Naive thymus-derived CD4-positive, alpha-beta T cell (primary cell): ENCODE measurements at regions of chr4 and their contacts with region 1.

Region 1: DNA sequence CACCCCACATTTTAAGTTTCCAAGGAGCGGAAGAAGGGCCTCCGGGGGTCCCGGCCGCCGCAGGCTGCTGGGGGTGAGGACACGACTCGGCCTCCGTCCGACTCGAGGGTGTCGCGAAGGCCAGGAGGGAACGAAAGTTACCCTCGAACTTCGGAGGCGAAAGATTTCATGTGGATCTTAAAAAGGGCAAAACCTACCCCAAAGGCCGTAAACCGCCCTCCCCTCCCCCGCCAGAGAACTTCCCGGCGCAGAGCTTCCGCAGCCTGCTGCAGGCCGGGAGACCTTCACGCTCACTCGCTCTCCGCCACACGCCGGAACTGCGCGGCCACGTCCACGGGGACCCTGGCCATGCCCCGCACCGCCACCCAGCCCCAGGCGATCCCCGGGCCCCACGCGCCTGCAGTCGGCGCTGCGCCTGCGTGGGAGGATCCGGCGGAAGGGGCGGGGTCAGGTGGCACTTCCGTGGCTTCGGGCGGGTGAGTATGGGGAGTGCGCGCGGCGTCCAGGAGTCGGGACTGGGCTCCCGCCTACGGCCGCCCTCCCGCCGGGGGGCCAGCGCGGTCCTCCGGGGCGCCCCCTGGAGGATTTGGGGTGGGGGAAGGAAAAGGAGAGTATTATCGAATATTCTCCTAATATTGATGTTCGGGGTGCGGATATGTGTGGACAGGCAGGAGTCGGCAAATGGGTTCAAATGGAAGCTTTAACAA is at the start of gene MMAA:
- DNase-seq: peak; percentile 90 to 99 (median 92)
- ATAC-seq: peak; percentile 97
- H3K4me3 ChIP-seq: peak within 1 kb of the TSS; percentile 93
- H3K4me3 Mint-ChIP-seq: peak within 1 kb of the TSS; percentile 90 to 99 (median 98)
- H3K27ac ChIP-seq: peak within 1 kb of the TSS; percentile 94
- H3K27ac Mint-ChIP-seq: peak within 1 kb of the TSS; percentile 95 to 100 (median 99)
- H3K4me1 ChIP-seq: peaks cover 18 to 29% of the 10 kb centered on the region in 2 donors
- H3K4me1 Mint-ChIP-seq: peaks cover 16 to 55% (median 47%) of the 10 kb centered on the region in 7 donors
- H3K27me3 ChIP-seq: no peaks in the 10 kb centered on the region
- H3K27me3 Mint-ChIP-seq: peaks cover 1 to 5% (median 5%) of the 10 kb centered on the region in 5 donors
- total RNA-seq, gene MMAA: 7.2 to 17.3 (median 12.8) TPM

Region 2: GRCh38 chr4:145034727-145035211 is 584.3 kb before region 1 on chr4:
- CTCF ChIA-PET with region 1: no interaction called
- POLR2A ChIA-PET with region 1: no interaction called
- intact Hi-C with region 1: loop called in 1 of 2 experiments (anchors 10 kb)
- DNase-seq: no peak
- ATAC-seq: no peak
- H3K4me3 ChIP-seq: no peak overlapping the region
- H3K4me3 Mint-ChIP-seq: no peak overlapping the region
- H3K27ac ChIP-seq: no peak overlapping the region
- H3K27ac Mint-ChIP-seq: no peak overlapping the region
- H3K4me1 ChIP-seq: no peaks in the 10 kb centered on the region
- H3K4me1 Mint-ChIP-seq: peaks cover 0 to 11% (median 0%) of the 10 kb centered on the region in 7 donors
- H3K27me3 ChIP-seq: no peaks in the 10 kb centered on the region
- H3K27me3 Mint-ChIP-seq: no peaks in the 10 kb centered on the region

Region 3: GRCh38 chr4:145154573-145154972 is 464.5 kb before region 1 on chr4:
- CTCF ChIA-PET with region 1: interaction called, 7 read pairs
- POLR2A ChIA-PET with region 1: no interaction called
- intact Hi-C with region 1: loop called in 1 of 2 experiments (anchors 2 kb)
- DNase-seq: peak in 1 of 9 donors; percentile 11
- ATAC-seq: peak; percentile 45
- H3K4me3 ChIP-seq: no peak overlapping the region
- H3K4me3 Mint-ChIP-seq: no peak overlapping the region
- H3K27ac ChIP-seq: no peak overlapping the region
- H3K27ac Mint-ChIP-seq: peak overlapping the region in 1 of 9 donors; percentile 38
- H3K4me1 ChIP-seq: no peaks in the 10 kb centered on the region
- H3K4me1 Mint-ChIP-seq: peaks cover 0 to 26% (median 4%) of the 10 kb centered on the region in 7 donors
- H3K27me3 ChIP-seq: no peaks in the 10 kb centered on the region
- H3K27me3 Mint-ChIP-seq: no peaks in the 10 kb centered on the region

Region 4: DNA sequence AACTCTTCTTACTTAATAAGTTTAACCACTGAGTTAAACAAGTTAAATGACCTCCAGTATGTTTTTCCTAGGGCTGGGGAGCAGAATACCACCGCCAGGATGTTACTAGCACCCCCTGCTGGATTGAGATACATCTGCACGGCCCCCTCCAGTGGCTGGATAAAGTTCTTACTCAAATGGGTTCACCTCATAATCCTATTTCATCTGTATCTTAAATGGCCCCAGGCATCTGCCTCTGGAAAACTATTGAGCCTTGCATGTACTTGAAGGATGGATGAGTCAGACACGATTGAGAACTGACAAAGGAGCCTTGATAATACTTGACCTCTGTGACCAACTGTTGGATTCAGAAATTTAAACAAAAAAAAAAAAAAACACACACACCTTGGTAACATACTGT is 61.4 kb before region 1 on chr4:
- CTCF ChIA-PET with region 1: no interaction called
- POLR2A ChIA-PET with region 1: no interaction called
- intact Hi-C with region 1: loop called in 1 of 2 experiments (anchors 5 kb)
- DNase-seq: peak; percentile 1 to 49 (median 38)
- ATAC-seq: peak; percentile 94
- H3K4me3 ChIP-seq: no peak overlapping the region
- H3K4me3 Mint-ChIP-seq: no peak overlapping the region
- H3K27ac ChIP-seq: no peak overlapping the region
- H3K27ac Mint-ChIP-seq: no peak overlapping the region
- H3K4me1 ChIP-seq: no peaks in the 10 kb centered on the region
- H3K4me1 Mint-ChIP-seq: peaks cover 0 to under 1% (median under 1%) of the 10 kb centered on the region in 7 donors
- H3K27me3 ChIP-seq: peaks cover 0 to 2% of the 10 kb centered on the region in 2 donors
- H3K27me3 Mint-ChIP-seq: peaks cover 0 to 21% (median 3%) of the 10 kb centered on the region in 5 donors

Region 5: DNA sequence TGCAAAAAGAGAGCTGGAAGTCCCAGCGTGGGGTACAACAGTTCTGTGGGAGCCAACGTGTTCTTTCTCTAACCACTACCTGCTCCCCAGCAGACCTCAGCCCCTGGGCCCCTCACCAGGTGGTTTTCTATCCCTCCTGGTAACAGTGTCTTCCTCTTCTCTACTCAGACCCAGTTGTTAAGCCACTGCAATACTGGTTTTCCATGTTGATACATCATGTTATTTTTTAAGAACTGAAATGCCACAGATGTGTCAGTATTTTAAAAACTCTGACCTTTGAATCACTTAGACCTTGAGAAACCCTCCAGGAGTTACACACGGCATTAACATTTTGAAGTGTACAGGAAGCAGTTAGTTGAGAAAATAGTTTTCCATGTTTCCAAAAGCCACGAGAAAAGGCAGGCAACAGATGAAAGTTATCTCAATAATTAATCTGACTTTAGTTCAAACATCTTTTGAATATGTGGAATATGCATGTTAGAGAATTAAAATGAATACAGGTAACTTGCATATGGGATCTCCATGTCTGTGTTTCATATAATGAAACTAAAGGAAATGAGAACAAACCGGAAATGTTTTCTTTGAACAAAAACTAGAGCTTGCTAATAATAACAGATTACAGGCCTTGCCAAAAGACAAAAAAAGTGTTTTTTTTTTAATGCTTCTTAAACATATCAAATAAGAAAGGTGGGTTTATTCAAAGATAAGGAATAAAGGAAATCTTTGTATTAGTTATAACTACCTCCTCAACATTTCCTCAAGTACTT is 210.7 kb after region 1 on chr4:
- CTCF ChIA-PET with region 1: no interaction called
- POLR2A ChIA-PET with region 1: no interaction called
- intact Hi-C with region 1: loop called in 1 of 2 experiments (anchors 2 kb)
- DNase-seq: peak in 1 of 9 donors; percentile 58
- ATAC-seq: no peak
- H3K4me3 ChIP-seq: peak overlapping the region; percentile 1
- H3K4me3 Mint-ChIP-seq: peak overlapping the region in 9 of 10 donors; percentile 43 to 83 (median 67)
- H3K27ac ChIP-seq: peak overlapping the region; percentile 40
- H3K27ac Mint-ChIP-seq: peak overlapping the region; percentile 25 to 92 (median 80)
- H3K4me1 ChIP-seq: peaks cover 8 to 9% of the 10 kb centered on the region in 2 donors
- H3K4me1 Mint-ChIP-seq: peaks cover 6 to 39% (median 31%) of the 10 kb centered on the region in 7 donors
- H3K27me3 ChIP-seq: no peaks in the 10 kb centered on the region
- H3K27me3 Mint-ChIP-seq: no peaks in the 10 kb centered on the region

Region 6: GRCh38 chr4:146522098-146522868 is 903.2 kb after region 1 on chr4:
- CTCF ChIA-PET with region 1: no interaction called
- POLR2A ChIA-PET with region 1: no interaction called
- intact Hi-C with region 1: loop called (anchors 2 to 5 kb)
- DNase-seq: peak; percentile 63 to 83 (median 76)
- ATAC-seq: peak; percentile 93
- H3K4me3 ChIP-seq: peak overlapping the region; percentile 95
- H3K4me3 Mint-ChIP-seq: no peak overlapping the region
- H3K27ac ChIP-seq: peak overlapping the region; percentile 85
- H3K27ac Mint-ChIP-seq: peak overlapping the region in 2 of 9 donors; percentile 58 to 69
- H3K4me1 ChIP-seq: peaks cover 13 to 24% of the 10 kb centered on the region in 2 donors
- H3K4me1 Mint-ChIP-seq: peaks cover 17 to 37% (median 31%) of the 10 kb centered on the region in 7 donors
- H3K27me3 ChIP-seq: no peaks in the 10 kb centered on the region
- H3K27me3 Mint-ChIP-seq: peaks cover 0 to 7% (median 0%) of the 10 kb centered on the region in 5 donors